ENCODE measurements at regions of chr14 and their contacts with region 1.

Region 1: GRCh38 chr14:50231475-50232275 is at the start of gene SOS2:
- DNase-seq: peak; percentile 68 to 69 (median 69)
- H3K4me3 ChIP-seq: peak within 1 kb of the TSS; percentile 76 to 99 (median 88)
- H3K4me3 Mint-ChIP-seq: peak within 1 kb of the TSS; percentile 86 to 97
- H3K27ac ChIP-seq: peak within 1 kb of the TSS; percentile 92 to 99
- H3K27ac Mint-ChIP-seq: peak within 1 kb of the TSS; percentile 90 to 97 (median 96)
- H3K4me1 ChIP-seq: peaks cover 18 to 31% of the 10 kb centered on the region in 2 donors
- H3K4me1 Mint-ChIP-seq: peaks cover 40% of the 10 kb centered on the region
- H3K27me3 ChIP-seq: no peaks in the 10 kb centered on the region
- H3K27me3 Mint-ChIP-seq: peaks cover 0 to 2% (median 0%) of the 10 kb centered on the region in 3 donors
- CTCF ChIP-seq: no peak
- polyA plus RNA-seq, gene SOS2: 9.3 to 24.3 (median 12.0) TPM

Region 2: DNA sequence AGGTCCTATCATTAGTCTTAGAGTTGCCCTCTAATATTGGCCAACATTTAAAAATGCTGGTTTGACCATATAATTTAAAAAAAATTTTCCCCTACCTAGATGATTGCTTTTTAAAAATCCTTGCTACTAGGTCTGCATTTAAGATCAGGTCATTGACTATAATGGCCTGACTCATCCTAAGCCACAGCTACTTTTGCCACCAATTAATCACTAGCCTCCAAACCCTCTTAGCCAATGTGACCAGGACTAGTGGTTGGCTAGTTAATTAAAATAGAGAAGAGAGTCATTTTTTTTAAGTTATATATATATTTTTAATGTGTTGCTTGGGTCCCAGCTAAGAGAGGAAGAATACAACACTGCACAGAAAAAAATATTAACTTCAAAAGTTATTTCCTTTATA is 57.8 kb before region 1 on chr14:
- intact Hi-C with region 1: no loop called
- DNase-seq: no peak
- H3K4me3 ChIP-seq: no peak overlapping the region
- H3K4me3 Mint-ChIP-seq: no peak overlapping the region
- H3K27ac ChIP-seq: no peak overlapping the region
- H3K27ac Mint-ChIP-seq: no peak overlapping the region
- H3K4me1 ChIP-seq: no peaks in the 10 kb centered on the region
- H3K4me1 Mint-ChIP-seq: no peaks in the 10 kb centered on the region
- H3K27me3 ChIP-seq: no peaks in the 10 kb centered on the region
- H3K27me3 Mint-ChIP-seq: no peaks in the 10 kb centered on the region
- CTCF ChIP-seq: no peak

Region 3: GRCh38 chr14:50210074-50210473 is 21.6 kb before region 1 on chr14:
- intact Hi-C with region 1: no loop called
- DNase-seq: no peak
- H3K4me3 ChIP-seq: no peak overlapping the region
- H3K4me3 Mint-ChIP-seq: no peak overlapping the region
- H3K27ac ChIP-seq: no peak overlapping the region
- H3K27ac Mint-ChIP-seq: no peak overlapping the region
- H3K4me1 ChIP-seq: no peaks in the 10 kb centered on the region
- H3K4me1 Mint-ChIP-seq: peaks cover under 1% of the 10 kb centered on the region
- H3K27me3 ChIP-seq: no peaks in the 10 kb centered on the region
- H3K27me3 Mint-ChIP-seq: no peaks in the 10 kb centered on the region
- CTCF ChIP-seq: no peak

Region 4: DNA sequence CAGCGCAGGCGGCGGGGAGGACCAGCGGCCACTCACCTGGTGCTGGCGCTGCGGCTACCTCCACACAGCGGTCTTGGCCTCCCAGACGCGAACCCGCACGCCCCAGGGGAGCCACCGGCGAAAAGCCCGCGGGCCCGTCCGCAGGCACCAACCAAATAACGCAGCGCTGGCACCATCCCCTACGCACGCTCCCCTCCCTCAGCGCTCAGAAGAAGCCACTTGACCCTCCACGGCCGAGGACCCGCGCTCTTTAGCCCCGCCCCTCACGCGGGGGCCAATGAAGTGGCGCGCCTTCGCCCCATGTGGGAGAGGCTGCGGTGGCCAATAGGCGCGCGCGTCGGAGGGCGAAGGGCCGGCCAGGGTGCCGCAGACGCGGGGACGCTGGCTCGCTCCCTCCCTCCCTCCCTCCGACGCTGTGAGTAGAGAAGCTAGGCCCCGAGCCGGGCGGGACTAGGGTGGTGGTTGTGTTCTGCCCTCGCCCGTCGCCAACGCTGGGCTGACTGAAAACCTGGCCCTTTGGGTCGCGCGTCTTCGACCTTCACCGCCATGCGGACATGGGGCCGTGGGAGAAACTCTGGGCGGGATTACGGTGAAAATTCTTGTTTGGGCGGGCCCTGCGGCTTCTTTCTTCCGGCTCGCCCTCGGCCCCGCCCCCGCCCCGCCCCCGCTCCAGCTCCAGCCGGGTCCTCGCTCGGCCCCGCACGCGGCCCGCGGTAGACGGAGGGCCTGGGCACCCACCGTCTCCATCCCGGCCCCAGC is 80.5 kb after region 1 on chr14 and contains the starts of genes DMAC2L and L2HGDH:
- intact Hi-C with region 1: loop called in 1 of 2 experiments (anchors 10 kb)
- DNase-seq: peak; percentile 87 to 88 (median 87)
- H3K4me3 ChIP-seq: peak within 1 kb of the TSS; percentile 69 to 91 (median 72)
- H3K4me3 Mint-ChIP-seq: peak within 1 kb of the TSS; percentile 89 to 96
- H3K27ac ChIP-seq: peak within 1 kb of the TSS; percentile 88 to 89
- H3K27ac Mint-ChIP-seq: peak within 1 kb of the TSS; percentile 88 to 98 (median 96)
- H3K4me1 ChIP-seq: peaks cover 18 to 25% of the 10 kb centered on the region in 2 donors
- H3K4me1 Mint-ChIP-seq: peaks cover 21% of the 10 kb centered on the region
- H3K27me3 ChIP-seq: no peaks in the 10 kb centered on the region
- H3K27me3 Mint-ChIP-seq: peaks cover 0 to 3% (median 0%) of the 10 kb centered on the region in 3 donors
- CTCF ChIP-seq: no peak
- polyA plus RNA-seq, gene DMAC2L: 13.4 to 17.3 (median 16.4) TPM
- polyA plus RNA-seq, gene L2HGDH: 0.11 to 0.86 (median 0.48) TPM

Measured in CD14-positive monocyte (primary cell).